ENCODE measurements at regions of chr7 and their contacts with region 1.

Region 1: DNA sequence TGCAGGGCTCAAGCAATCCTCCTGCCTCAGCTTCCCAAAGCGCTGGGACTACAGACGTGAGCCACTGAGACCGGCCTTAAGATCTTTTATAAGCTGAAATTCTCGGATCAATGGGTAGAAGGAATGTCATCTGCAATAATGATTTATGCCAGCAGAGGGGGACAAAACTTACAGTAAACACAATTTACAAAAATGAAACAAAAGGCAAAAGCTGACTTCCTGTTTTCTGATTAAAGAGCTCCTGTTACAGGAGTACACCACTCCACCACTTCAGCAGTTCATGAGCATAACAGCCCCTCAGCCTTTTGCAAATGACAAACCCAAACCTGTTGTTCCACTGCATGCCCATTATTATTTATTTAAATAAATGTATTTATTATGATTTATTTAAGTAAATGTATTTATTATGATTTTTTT is 88.5 kb upstream of the ATP6V0A4 start:
- DNase-seq: no peak
- ATAC-seq: peak; percentile 87
- H3K4me3 Mint-ChIP-seq: peak overlapping the region; percentile 65
- H3K27ac Mint-ChIP-seq: peak overlapping the region; percentile 79
- H3K4me1 Mint-ChIP-seq: peaks cover 18% of the 10 kb centered on the region
- H3K27me3 Mint-ChIP-seq: peaks cover 6% of the 10 kb centered on the region

Region 2: GRCh38 chr7:138871065-138871813 is 15.3 kb before region 1 on chr7:
- POLR2A ChIA-PET with region 1: no interaction called
- DNase-seq: no peak
- ATAC-seq: no peak
- H3K4me3 Mint-ChIP-seq: no peak overlapping the region
- H3K27ac Mint-ChIP-seq: no peak overlapping the region
- H3K4me1 Mint-ChIP-seq: peaks cover 13% of the 10 kb centered on the region
- H3K27me3 Mint-ChIP-seq: no peaks in the 10 kb centered on the region

Region 3: DNA sequence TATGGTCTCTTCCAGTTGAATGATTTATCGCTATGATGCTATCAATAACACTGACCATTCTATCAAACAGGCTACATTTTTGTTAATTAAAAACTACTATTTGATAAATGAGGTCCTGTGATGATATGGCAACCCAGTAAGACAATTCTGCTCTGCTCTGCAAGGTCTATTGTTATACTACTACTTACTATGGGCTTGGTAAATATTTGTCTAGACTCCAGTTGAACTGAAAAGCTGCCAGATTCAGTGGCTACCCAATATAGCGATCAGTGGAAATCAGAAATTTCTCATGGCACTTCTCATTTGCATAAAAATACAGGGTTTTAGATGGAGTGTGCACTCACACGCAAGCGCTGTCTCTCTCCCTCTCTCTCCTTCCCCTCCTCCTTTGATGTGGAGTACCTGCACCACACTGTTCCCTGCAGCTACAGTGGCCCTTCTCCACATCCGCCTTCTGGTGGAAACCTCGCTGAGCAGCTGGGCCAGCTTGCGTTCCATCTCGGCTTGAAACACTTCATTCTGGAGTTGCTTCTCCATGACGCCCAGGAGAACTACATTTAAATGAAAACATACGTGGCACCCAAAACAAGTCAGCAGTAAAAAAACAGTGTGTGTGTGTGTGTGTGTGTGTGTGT is 16.8 kb after region 1 on chr7:
- POLR2A ChIA-PET with region 1: interaction called, 13 read pairs
- DNase-seq: peak; percentile 81
- ATAC-seq: peak; percentile 91
- H3K4me3 Mint-ChIP-seq: peak overlapping the region; percentile 72
- H3K27ac Mint-ChIP-seq: peak overlapping the region; percentile 89
- H3K4me1 Mint-ChIP-seq: peaks cover 53% of the 10 kb centered on the region
- H3K27me3 Mint-ChIP-seq: peaks cover 10% of the 10 kb centered on the region

Measured in activated naive CD8-positive, alpha-beta T cell treated with anti-CD3 and anti-CD28 coated beads, Interleukin-2, amount 10 ng/mL, durations not matched to agents 7 days and 5 days (primary cell).